ENCODE measurements at regions of chr14 and their contacts with region 1.

Region 1: GRCh38 chr14:100645192-100645990 is 58.2 kb upstream of the BEGAIN start:
- DNase-seq: peak; percentile 76 to 93
- ATAC-seq: peak; percentile 81 to 89 (median 85)
- H3K4me3 ChIP-seq: no peak overlapping the region
- H3K4me3 Mint-ChIP-seq: peak overlapping the region; percentile 43
- H3K27ac ChIP-seq: no peak overlapping the region
- H3K27ac Mint-ChIP-seq: peak overlapping the region in 1 of 2 donors; percentile 28
- H3K4me1 ChIP-seq: peaks cover 54% of the 10 kb centered on the region
- H3K4me1 Mint-ChIP-seq: peaks cover 51 to 57% of the 10 kb centered on the region in 2 donors
- H3K27me3 ChIP-seq: peaks cover 17% of the 10 kb centered on the region
- H3K27me3 Mint-ChIP-seq: peaks cover 63 to 78% of the 10 kb centered on the region in 2 donors
- CTCF ChIP-seq: peak; percentile 81

Region 2: DNA sequence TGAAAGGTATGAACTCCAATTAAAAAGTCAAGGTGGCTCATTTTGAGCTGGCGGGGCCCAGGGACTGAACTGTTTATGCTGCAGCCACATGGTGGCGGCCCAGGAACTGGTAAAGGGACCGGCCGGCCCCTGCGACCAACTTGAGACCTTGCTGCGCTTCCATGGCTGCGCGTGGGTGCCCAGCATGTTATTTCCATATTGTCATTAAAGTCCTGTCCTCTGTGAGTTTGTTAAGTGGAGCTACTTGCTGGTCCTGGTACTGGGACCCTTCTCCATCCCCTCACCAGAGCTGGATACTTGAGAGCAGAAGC is 120.5 kb before region 1 on chr14:
- intact Hi-C with region 1: loop called (anchors 1 kb)
- DNase-seq: peak; percentile 18 to 57
- ATAC-seq: peak in 1 of 3 donors; percentile 53
- H3K4me3 ChIP-seq: no peak overlapping the region
- H3K4me3 Mint-ChIP-seq: no peak overlapping the region
- H3K27ac ChIP-seq: no peak overlapping the region
- H3K27ac Mint-ChIP-seq: no peak overlapping the region
- H3K4me1 ChIP-seq: no peaks in the 10 kb centered on the region
- H3K4me1 Mint-ChIP-seq: no peaks in the 10 kb centered on the region
- H3K27me3 ChIP-seq: no peaks in the 10 kb centered on the region
- H3K27me3 Mint-ChIP-seq: no peaks in the 10 kb centered on the region
- CTCF ChIP-seq: peak; percentile 48

Region 3: GRCh38 chr14:100610511-100611217 is 34.7 kb before region 1 on chr14:
- intact Hi-C with region 1: no loop called
- DNase-seq: no peak
- ATAC-seq: no peak
- H3K4me3 ChIP-seq: no peak overlapping the region
- H3K4me3 Mint-ChIP-seq: no peak overlapping the region
- H3K27ac ChIP-seq: no peak overlapping the region
- H3K27ac Mint-ChIP-seq: no peak overlapping the region
- H3K4me1 ChIP-seq: no peaks in the 10 kb centered on the region
- H3K4me1 Mint-ChIP-seq: no peaks in the 10 kb centered on the region
- H3K27me3 ChIP-seq: no peaks in the 10 kb centered on the region
- H3K27me3 Mint-ChIP-seq: peaks cover 0 to 20% of the 10 kb centered on the region in 2 donors
- CTCF ChIP-seq: no peak

Region 4: DNA sequence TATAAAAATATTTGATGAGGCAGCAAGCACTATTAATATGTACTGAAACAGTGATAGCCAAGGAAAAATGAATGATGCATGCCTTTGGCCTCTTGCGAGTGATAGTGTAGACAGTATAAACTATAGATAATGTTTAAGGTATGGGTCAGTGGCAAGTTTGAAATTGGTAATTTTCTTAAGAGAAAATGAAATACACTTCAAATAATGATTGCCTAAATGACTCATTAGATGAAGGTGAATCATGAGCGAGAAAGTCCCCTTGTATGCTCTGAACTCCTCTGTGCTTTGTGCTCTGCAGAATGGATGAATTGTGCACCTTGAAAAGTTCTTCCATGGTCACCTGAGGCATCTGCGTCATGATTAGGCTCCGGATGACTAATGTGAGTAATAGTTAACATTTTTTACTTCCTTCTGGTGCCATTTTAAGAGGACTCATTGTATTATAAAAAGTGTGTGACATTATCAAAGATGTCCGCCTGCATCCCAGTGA is 343.1 kb after region 1 on chr14:
- intact Hi-C with region 1: no loop called
- DNase-seq: no peak
- ATAC-seq: no peak
- H3K4me3 ChIP-seq: no peak overlapping the region
- H3K4me3 Mint-ChIP-seq: no peak overlapping the region
- H3K27ac ChIP-seq: no peak overlapping the region
- H3K27ac Mint-ChIP-seq: no peak overlapping the region
- H3K4me1 ChIP-seq: no peaks in the 10 kb centered on the region
- H3K4me1 Mint-ChIP-seq: no peaks in the 10 kb centered on the region
- H3K27me3 ChIP-seq: no peaks in the 10 kb centered on the region
- H3K27me3 Mint-ChIP-seq: peaks cover 8 to 37% of the 10 kb centered on the region in 2 donors
- CTCF ChIP-seq: no peak

Measured in natural killer cell (primary cell).